Calu3 (cell line): ENCODE measurements at regions of chr12 and their contacts with region 1.

Region 1: DNA sequence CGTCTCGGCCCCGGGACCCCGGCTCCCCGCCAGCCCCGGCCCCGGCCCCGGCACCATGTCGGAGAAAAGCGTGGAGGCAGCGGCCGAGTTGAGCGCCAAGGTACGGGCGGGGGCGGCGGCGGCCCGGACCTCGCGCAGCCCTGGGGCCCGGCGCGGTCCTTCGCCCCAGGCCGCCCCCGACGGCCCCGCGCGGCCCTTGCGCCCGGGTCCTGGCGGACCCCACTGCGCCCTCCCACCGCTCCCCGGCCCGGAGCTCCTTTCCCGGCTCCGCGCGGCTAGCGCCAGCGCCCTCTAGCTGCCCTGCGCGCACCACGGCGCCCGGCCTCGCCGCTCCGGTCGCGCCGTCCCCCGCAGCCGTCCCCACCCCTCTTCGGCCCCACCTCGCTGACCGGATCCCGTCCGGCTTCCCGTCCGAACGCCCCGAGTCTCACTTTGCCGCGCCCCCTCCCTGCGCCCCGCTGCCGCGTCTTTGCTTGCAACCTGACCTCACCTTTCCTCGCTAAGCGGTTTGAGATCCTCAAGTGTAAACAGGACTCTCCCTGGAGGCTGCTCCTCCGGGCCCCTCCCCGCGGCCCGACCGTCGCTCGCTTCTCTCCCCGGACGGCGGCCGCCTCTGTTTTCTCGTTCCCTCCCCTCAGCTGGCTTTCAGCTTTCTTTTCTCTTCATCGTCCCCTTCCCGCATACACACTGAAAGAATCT is 637 bp downstream of the PTMS start:
- DNase-seq: peak; percentile 87
- H3K4me3 Mint-ChIP-seq: peak overlapping the region; percentile 81
- H3K27ac Mint-ChIP-seq: peak overlapping the region; percentile 80
- H3K4me1 Mint-ChIP-seq: peaks cover 40% of the 10 kb centered on the region
- H3K27me3 Mint-ChIP-seq: peaks cover 34% of the 10 kb centered on the region
- CTCF ChIP-seq: peak; percentile 61

Region 2: DNA sequence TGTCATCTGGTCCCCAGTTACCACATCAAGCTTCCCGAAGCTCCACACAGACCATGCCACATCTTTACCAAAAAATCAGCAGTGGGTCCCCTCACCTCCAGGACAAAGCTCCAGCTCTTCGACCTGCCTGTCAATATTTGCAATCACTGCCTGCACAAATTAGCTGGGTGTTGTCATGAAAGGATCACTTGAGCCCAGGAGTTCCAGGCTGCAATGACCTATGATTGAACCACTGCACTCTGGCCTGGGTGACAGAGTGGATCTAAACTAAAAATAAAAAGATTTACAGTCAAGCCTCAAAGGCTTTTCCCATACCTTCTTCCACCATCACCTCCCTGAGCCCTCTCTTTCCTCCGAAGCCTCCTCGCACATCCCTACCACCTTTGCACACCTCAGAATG is 29.8 kb after region 1 on chr12:
- CTCF ChIA-PET with region 1: no interaction called
- intact Hi-C with region 1: loop called (anchors 1 kb)
- DNase-seq: no peak
- H3K4me3 Mint-ChIP-seq: no peak overlapping the region
- H3K27ac Mint-ChIP-seq: no peak overlapping the region
- H3K4me1 Mint-ChIP-seq: no peaks in the 10 kb centered on the region
- H3K27me3 Mint-ChIP-seq: peaks cover 84% of the 10 kb centered on the region
- CTCF ChIP-seq: no peak

Region 3: GRCh38 chr12:6839482-6840201 is 72.8 kb after region 1 on chr12:
- CTCF ChIA-PET with region 1: interaction called, 11 read pairs
- intact Hi-C with region 1: no loop called
- DNase-seq: no peak
- H3K4me3 Mint-ChIP-seq: no peak overlapping the region
- H3K27ac Mint-ChIP-seq: no peak overlapping the region
- H3K4me1 Mint-ChIP-seq: peaks cover 13% of the 10 kb centered on the region
- H3K27me3 Mint-ChIP-seq: peaks cover 67% of the 10 kb centered on the region
- CTCF ChIP-seq: no peak